ENCODE measurements at regions of chr2 and their contacts with region 1.

Region 1: DNA sequence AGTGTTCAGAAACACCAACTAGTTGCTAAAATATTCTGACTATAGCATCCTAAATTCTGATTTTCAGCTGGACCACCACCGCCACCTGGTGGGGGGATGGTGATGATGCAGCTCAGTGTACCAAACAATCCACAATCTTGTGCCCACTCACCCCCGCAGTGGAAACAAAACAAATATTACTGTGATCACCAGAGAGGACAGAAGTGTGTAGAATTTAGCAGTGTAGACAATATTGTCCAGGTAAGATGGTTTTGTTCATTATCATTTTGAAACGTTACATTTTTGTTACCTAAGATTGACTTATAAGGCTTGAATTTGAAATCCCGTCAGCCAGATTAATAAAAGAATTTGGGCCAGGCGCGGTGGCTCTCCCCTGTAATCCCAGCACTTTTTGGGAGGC is 31.7 kb upstream of the UBXN4 start:
- DNase-seq: peak in 1 of 2 donors; percentile 32
- ATAC-seq: peak in 1 of 2 donors; percentile 47
- H3K4me3 ChIP-seq: no peak overlapping the region
- H3K27ac ChIP-seq: no peak overlapping the region
- H3K4me1 ChIP-seq: peaks cover 2 to 4% of the 10 kb centered on the region in 2 donors
- H3K27me3 ChIP-seq: no peaks in the 10 kb centered on the region
- CTCF ChIP-seq: peak; percentile 77 to 93 (median 86)
- POLR2A ChIP-seq: no peak

Region 2: DNA sequence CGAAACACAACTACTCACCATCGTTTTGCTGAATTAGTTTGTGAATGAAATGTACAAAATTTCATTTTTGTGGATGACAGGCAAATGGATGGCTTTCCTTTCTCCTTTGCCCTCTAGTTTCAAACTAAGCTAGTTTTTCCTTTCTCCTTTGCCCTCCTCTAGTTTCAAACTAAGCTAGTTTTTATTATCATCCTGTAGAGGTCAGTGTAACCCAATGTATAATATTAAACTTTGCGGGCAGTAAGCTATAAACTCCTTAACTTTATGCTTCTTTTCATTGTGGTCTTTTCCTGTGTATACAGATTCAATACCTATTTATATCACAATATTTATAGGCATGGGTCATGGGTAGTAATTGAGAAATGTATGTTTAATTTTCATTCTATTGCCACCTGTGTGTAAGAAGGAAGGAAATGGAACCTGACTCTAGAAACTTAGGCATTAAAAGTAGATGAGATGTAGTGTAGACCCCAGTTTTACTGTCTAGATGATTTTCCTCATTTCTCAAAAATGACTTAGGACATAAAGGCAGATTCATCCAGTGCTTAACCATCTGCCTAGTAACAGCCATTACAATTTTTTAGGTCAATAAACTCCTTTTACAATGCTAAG is 720.9 kb before region 1 on chr2:
- in situ Hi-C with region 1: loop called in 1 of 4 experiments (anchors 10 kb)
- intact Hi-C with region 1: loop called (anchors 5 kb)
- DNase-seq: no peak
- ATAC-seq: no peak
- H3K4me3 ChIP-seq: no peak overlapping the region
- H3K27ac ChIP-seq: no peak overlapping the region
- H3K4me1 ChIP-seq: no peaks in the 10 kb centered on the region
- H3K27me3 ChIP-seq: no peaks in the 10 kb centered on the region
- CTCF ChIP-seq: peak in 2 of 5 experiments; percentile 22 to 42
- POLR2A ChIP-seq: no peak

Region 3: DNA sequence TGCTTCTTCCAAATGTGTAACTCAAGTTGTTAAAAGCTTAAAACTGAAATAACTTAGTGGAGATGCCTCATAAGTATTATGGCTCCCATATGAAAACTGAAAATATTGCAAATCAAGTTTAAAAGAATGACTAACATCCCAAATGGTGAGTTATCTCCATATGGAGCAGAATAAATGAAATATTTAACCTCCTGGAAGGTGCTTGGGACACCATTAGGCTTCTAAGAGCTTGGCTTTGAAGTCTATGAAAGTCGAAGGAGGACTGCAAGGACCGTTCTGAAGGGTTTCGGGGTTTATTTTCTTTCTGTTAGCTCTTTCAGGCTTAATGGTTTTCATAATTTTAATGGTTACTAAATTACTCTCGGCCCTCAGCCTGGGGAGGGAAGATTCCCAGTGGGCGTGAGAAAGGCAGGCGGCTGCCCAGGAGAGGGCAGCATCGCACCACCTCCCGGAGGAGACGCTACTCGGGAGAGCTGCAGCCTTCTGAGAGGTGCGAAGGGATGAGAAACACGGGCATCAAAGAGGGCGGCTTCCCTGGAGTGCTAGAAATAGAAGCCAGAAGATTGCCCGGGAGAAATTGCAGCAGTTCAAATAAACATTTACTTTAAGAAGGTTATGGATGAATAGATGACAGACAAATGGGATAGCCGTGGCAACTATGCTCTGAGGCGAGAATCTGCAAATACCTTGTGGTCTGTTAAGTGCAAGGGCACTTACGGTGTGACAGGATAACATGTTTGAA is 705.8 kb before region 1 on chr2:
- in situ Hi-C with region 1: loop called (anchors 5 to 25 kb)
- intact Hi-C with region 1: loop called (anchors 1 kb)
- DNase-seq: peak; percentile 38 to 42
- ATAC-seq: peak; percentile 74 to 91
- H3K4me3 ChIP-seq: no peak overlapping the region
- H3K27ac ChIP-seq: no peak overlapping the region
- H3K4me1 ChIP-seq: peaks cover 0 to 6% of the 10 kb centered on the region in 2 donors
- H3K27me3 ChIP-seq: peaks cover 0 to 13% (median 0%) of the 10 kb centered on the region in 3 donors
- CTCF ChIP-seq: peak; percentile 58 to 92 (median 74)
- POLR2A ChIP-seq: no peak

Region 4: GRCh38 chr2:135473567-135473966 is 236.4 kb before region 1 on chr2:
- in situ Hi-C with region 1: loop called (anchors 5 to 10 kb)
- intact Hi-C with region 1: loop called (anchors 2 kb)
- DNase-seq: peak in 1 of 2 donors; percentile 24
- ATAC-seq: peak; percentile 60 to 83
- H3K4me3 ChIP-seq: no peak overlapping the region
- H3K27ac ChIP-seq: no peak overlapping the region
- H3K4me1 ChIP-seq: peaks cover 3 to 9% of the 10 kb centered on the region in 2 donors
- H3K27me3 ChIP-seq: no peaks in the 10 kb centered on the region
- CTCF ChIP-seq: peak; percentile 55 to 72 (median 59)
- POLR2A ChIP-seq: no peak

Region 5: GRCh38 chr2:135756692-135757091 is 46.7 kb after region 1 on chr2:
- in situ Hi-C with region 1: no loop called
- intact Hi-C with region 1: no loop called
- DNase-seq: no peak
- ATAC-seq: no peak
- H3K4me3 ChIP-seq: no peak overlapping the region
- H3K27ac ChIP-seq: no peak overlapping the region
- H3K4me1 ChIP-seq: no peaks in the 10 kb centered on the region
- H3K27me3 ChIP-seq: no peaks in the 10 kb centered on the region
- CTCF ChIP-seq: no peak
- POLR2A ChIP-seq: no peak

Measured in gastrocnemius medialis (tissue), 4 donors.